ENCODE measurements at regions of chr3 and their contacts with region 1.

Region 1: GRCh38 chr3:71006810-71007785 is 576.4 kb downstream of the FOXP1 start:
- DNase-seq: no peak
- ATAC-seq: peak in 1 of 2 donors; percentile 60

Region 2: GRCh38 chr3:71103430-71103921 is 96.4 kb after region 1 on chr3:
- intact Hi-C with region 1: no loop called
- DNase-seq: peak; percentile 70
- ATAC-seq: peak; percentile 48 to 58

Region 3: DNA sequence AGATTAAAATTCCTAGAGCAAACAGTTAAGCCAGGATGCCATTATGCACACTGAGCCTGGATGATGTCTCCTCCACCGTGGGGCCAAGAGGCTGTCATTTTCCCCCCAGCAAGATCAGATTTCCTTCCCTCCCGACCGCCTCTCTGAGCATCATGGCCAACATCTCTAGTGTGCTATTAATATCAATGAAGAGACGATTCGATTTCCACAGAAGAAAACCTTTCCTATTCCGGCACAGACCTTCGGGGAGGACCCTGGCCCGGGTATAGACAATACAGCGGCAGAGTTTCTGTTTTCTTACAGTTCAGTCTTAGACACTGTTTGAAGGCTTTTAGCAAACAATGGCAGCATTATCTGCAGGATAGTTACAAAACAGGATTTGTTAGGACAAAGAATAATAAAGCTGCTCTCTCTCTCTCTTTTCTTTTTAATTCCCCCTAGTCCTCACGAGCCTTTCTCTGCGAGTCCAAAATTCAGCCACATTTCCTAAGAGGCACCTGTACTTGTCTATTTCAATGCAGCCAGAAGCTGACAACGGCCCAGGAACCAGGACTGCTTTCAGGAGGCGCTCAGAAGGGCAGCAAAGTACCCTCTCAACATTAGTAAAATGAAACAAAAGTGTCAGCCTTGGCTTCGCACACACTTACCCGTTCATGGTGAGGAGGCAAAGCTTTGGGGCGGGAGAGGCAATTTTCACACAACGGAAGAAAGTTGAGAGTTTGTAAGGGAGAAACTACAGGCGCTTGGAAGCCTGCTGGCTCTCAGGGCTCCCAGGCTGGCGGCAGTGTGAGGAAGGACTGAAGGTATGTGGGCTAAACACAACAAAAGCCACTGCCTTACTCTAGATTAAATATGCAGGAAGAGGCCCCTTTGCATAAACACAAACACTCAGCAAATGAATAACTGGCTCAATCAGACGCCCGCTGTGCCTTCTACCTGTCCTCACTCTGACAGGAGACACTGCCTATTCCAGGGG is 298.4 kb after region 1 on chr3:
- intact Hi-C with region 1: loop called in 1 of 2 experiments (anchors 5 kb)
- DNase-seq: peak; percentile 38
- ATAC-seq: peak; percentile 84 to 91

Region 4: GRCh38 chr3:71734883-71735282 is 727.8 kb after region 1 on chr3:
- intact Hi-C with region 1: no loop called
- DNase-seq: no peak
- ATAC-seq: no peak

Measured in left cardiac atrium (tissue), 4 donors.